CD4-positive, alpha-beta T cell (primary cell): ENCODE measurements at regions of chr5 and their contacts with region 1.

Region 1: DNA sequence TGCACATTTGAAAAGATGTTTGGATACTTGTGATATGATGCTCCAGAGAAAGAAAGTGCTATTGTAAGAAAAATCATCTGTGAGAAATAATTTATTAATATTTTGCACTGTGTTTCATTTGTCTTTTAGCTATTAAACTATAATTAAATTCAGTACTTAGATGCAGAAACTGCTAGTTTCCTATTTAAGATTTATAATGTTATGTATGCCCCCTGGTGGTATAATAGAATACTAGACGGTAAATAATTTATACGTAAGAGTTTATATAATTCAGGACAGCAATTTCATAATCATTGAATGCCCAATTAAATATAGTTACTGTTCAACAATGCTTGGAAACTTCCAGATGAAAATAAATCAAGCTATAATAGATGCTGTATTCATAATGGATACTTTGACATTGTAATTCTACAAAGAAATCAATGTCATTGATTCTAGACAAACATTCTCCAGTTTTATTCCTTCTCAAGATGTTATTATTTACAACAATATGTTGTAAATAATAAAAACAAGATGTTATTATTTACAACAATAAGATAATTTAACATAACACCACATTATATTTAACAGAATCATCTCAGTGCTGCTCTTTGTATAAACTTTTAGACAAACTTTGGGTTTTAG is 101.0 kb downstream of the TMEM232 start:
- DNase-seq: peak in 3 of 14 experiments; percentile 27 to 37 (median 28)
- ATAC-seq: no peak
- H3K4me3 ChIP-seq: no peak overlapping the region
- H3K4me3 Mint-ChIP-seq: no peak overlapping the region
- H3K27ac ChIP-seq: no peak overlapping the region
- H3K27ac Mint-ChIP-seq: no peak overlapping the region
- H3K4me1 ChIP-seq: no peaks in the 10 kb centered on the region
- H3K4me1 Mint-ChIP-seq: no peaks in the 10 kb centered on the region
- H3K27me3 ChIP-seq: no peaks in the 10 kb centered on the region
- H3K27me3 Mint-ChIP-seq: peaks cover 6% of the 10 kb centered on the region
- CTCF ChIP-seq: peak; percentile 64

Region 2: DNA sequence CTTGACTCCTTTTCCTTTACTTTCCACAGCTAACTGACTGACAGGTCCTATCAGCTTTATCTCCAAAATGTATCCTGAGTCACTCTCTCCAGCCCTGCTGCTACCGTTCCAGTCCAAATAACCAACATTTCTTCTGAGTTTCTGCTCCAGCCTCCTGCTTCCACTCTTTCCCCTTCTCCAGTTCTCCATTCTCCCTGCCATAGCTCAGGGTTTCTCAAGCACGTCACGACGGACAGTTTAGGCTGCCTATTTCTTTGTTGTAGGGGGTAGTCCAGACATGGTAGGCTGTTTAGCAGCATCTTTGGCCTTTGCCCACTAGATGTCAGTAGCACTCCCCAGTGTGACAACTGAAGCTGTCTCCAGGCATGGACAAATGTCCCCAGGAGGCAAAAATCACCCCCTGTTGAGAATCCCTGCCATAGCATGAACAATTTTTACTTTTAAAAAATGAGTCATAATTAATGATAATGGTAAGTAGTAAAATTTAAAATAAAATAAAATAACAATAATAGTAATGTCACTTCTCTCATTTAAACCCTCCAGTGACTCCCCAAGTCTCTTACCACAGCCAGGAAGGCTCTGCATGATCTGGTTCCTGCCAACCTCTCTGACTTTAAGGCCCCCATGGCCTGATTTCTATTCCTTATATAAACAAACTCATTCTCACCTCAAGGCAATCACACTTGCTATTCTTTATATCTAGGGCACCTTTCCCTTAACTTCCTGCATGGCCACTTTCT is 1983.2 kb before region 1 on chr5:
- CTCF ChIA-PET with region 1: no interaction called
- POLR2A ChIA-PET with region 1: no interaction called
- intact Hi-C with region 1: loop called (anchors 2 to 10 kb)
- DNase-seq: peak; percentile 16 to 69 (median 32)
- ATAC-seq: peak; percentile 71
- H3K4me3 ChIP-seq: no peak overlapping the region
- H3K4me3 Mint-ChIP-seq: no peak overlapping the region
- H3K27ac ChIP-seq: no peak overlapping the region
- H3K27ac Mint-ChIP-seq: no peak overlapping the region
- H3K4me1 ChIP-seq: no peaks in the 10 kb centered on the region
- H3K4me1 Mint-ChIP-seq: no peaks in the 10 kb centered on the region
- H3K27me3 ChIP-seq: no peaks in the 10 kb centered on the region
- H3K27me3 Mint-ChIP-seq: peaks cover 8% of the 10 kb centered on the region
- CTCF ChIP-seq: peak; percentile 79

Region 3: DNA sequence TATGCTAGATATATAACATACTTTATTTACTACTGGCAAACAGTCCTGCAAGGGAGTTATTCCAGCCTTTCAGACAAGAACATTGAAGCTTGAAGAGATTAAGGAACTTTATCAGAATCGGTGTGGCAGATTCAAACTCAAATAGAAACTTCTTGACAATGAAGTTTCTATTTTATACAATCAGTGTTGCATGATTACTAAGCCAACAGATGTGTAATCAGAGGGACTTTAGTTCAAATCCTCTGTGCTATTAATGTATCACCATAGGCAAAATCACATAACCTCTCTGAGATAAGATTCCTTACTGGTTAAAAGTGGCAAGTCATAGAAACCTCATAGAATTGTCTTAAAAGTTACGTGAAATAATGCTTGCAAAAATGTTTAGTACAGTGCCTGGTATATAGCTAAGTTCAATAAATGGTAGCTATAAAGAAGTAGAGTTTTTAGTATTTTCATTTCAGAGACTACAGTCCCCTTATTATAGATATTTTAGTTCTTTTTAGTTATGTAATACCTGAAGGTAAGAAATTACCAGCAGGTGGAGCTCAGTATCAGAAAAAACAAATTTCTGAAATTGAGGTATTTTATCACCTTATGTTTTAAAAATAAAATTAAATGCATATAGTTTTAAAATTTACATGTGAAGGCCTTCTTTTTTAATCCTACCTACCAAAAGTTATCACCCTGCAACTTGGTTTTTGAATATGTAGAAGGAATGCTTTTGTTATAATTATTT is 1705.7 kb before region 1 on chr5:
- CTCF ChIA-PET with region 1: no interaction called
- POLR2A ChIA-PET with region 1: no interaction called
- intact Hi-C with region 1: loop called in 1 of 2 experiments (anchors 5 kb)
- DNase-seq: peak in 2 of 14 experiments; percentile 6 to 8
- ATAC-seq: no peak
- H3K4me3 ChIP-seq: no peak overlapping the region
- H3K4me3 Mint-ChIP-seq: no peak overlapping the region
- H3K27ac ChIP-seq: no peak overlapping the region
- H3K27ac Mint-ChIP-seq: no peak overlapping the region
- H3K4me1 ChIP-seq: no peaks in the 10 kb centered on the region
- H3K4me1 Mint-ChIP-seq: peaks cover 6% of the 10 kb centered on the region
- H3K27me3 ChIP-seq: no peaks in the 10 kb centered on the region
- H3K27me3 Mint-ChIP-seq: no peaks in the 10 kb centered on the region
- CTCF ChIP-seq: peak; percentile 51

Region 4: DNA sequence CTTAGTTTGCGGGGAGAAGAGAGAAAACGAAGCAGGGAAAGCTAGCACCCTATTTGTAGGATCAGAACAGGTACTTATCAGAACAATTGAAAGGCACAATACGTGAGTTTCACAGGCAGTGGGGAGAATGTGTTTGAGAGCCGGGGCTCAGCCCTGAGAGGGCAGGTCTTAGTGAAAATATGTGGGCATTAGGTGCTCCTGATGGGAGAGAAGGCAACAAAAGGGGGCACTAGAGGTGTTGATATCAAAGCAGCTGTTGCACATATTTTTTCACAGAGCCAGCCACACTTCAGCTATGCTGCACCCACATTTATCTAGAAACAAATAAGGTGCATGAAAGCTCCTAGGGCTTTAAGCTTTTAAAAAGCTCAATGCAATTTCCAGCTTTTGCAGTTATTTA is 1035.5 kb before region 1 on chr5:
- CTCF ChIA-PET with region 1: no interaction called
- POLR2A ChIA-PET with region 1: no interaction called
- intact Hi-C with region 1: loop called in 1 of 2 experiments (anchors 5 kb)
- DNase-seq: peak in 4 of 14 experiments; percentile 7 to 46 (median 40)
- ATAC-seq: no peak
- H3K4me3 ChIP-seq: no peak overlapping the region
- H3K4me3 Mint-ChIP-seq: no peak overlapping the region
- H3K27ac ChIP-seq: no peak overlapping the region
- H3K27ac Mint-ChIP-seq: no peak overlapping the region
- H3K4me1 ChIP-seq: no peaks in the 10 kb centered on the region
- H3K4me1 Mint-ChIP-seq: peaks cover 10% of the 10 kb centered on the region
- H3K27me3 ChIP-seq: no peaks in the 10 kb centered on the region
- H3K27me3 Mint-ChIP-seq: no peaks in the 10 kb centered on the region
- CTCF ChIP-seq: no peak

Region 5: DNA sequence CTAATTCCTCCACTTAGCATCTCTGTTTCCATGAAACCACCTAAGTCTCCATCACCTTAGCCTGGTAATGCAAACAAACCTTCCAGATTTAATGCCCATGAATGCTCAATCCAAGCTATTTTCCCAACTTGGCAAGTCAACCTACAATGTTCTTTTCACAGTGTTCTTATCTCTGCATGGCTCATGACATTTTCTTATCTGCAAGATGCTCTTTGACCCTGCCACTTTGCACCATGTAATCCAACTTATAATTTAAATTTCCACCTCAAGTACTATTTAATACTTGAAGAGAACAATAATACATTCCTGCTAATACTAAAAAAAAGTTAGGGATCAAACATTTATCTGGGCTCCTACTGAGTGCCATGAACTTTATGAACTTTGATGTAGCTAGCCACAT is 63.3 kb before region 1 on chr5:
- CTCF ChIA-PET with region 1: no interaction called
- POLR2A ChIA-PET with region 1: no interaction called
- intact Hi-C with region 1: no loop called
- DNase-seq: no peak
- ATAC-seq: no peak
- H3K4me3 ChIP-seq: no peak overlapping the region
- H3K4me3 Mint-ChIP-seq: no peak overlapping the region
- H3K27ac ChIP-seq: no peak overlapping the region
- H3K27ac Mint-ChIP-seq: no peak overlapping the region
- H3K4me1 ChIP-seq: no peaks in the 10 kb centered on the region
- H3K4me1 Mint-ChIP-seq: no peaks in the 10 kb centered on the region
- H3K27me3 ChIP-seq: no peaks in the 10 kb centered on the region
- H3K27me3 Mint-ChIP-seq: peaks cover 11% of the 10 kb centered on the region
- CTCF ChIP-seq: no peak